Right cardiac atrium (tissue), 5 donors: ENCODE measurements at regions of chr5 and their contacts with region 1.

Region 1: GRCh38 chr5:38922199-38922598 is 76.4 kb downstream of the OSMR start:
- DNase-seq: peak; percentile 27 to 76 (median 72)
- ATAC-seq: peak; percentile 60 to 67
- H3K4me3 ChIP-seq: no peak overlapping the region
- H3K27ac ChIP-seq: no peak overlapping the region
- H3K4me1 ChIP-seq: peaks cover 3% of the 10 kb centered on the region
- H3K27me3 ChIP-seq: no peaks in the 10 kb centered on the region

Region 2: GRCh38 chr5:38831909-38832308 is 90.3 kb before region 1 on chr5:
- intact Hi-C with region 1: loop called in 3 of 4 experiments (anchors 5 to 10 kb)
- DNase-seq: peak in 1 of 3 donors; percentile 29
- ATAC-seq: peak in 1 of 2 donors; percentile 27
- H3K4me3 ChIP-seq: no peak overlapping the region
- H3K27ac ChIP-seq: no peak overlapping the region
- H3K4me1 ChIP-seq: peaks cover 3% of the 10 kb centered on the region
- H3K27me3 ChIP-seq: no peaks in the 10 kb centered on the region

Region 3: GRCh38 chr5:38845526-38846378 is 76.4 kb before region 1 on chr5 and contains the start of gene OSMR:
- intact Hi-C with region 1: loop called in 1 of 4 experiments (anchors 5 kb)
- DNase-seq: peak; percentile 97
- ATAC-seq: peak; percentile 98
- H3K4me3 ChIP-seq: peak within 1 kb of the TSS; percentile 57
- H3K27ac ChIP-seq: peak within 1 kb of the TSS; percentile 95
- H3K4me1 ChIP-seq: peaks cover 6% of the 10 kb centered on the region
- H3K27me3 ChIP-seq: no peaks in the 10 kb centered on the region
- total RNA-seq, gene OSMR: 17.3 to 47.6 (median 21.7) TPM